Cardiac septum (tissue), 1 donor: ENCODE measurements at regions of chr2 and their contacts with region 1.

Region 1: GRCh38 chr2:181457121-181457740 is at the start of gene ITGA4:
- DNase-seq: peak; percentile 89
- total RNA-seq, gene ITGA4: 3.4 TPM

Region 2: GRCh38 chr2:181104512-181105115 is 352.6 kb before region 1 on chr2:
- intact Hi-C with region 1: loop called (anchors 5 kb)
- DNase-seq: no peak